ENCODE measurements at regions of chr11 and their contacts with region 1.

Region 1: DNA sequence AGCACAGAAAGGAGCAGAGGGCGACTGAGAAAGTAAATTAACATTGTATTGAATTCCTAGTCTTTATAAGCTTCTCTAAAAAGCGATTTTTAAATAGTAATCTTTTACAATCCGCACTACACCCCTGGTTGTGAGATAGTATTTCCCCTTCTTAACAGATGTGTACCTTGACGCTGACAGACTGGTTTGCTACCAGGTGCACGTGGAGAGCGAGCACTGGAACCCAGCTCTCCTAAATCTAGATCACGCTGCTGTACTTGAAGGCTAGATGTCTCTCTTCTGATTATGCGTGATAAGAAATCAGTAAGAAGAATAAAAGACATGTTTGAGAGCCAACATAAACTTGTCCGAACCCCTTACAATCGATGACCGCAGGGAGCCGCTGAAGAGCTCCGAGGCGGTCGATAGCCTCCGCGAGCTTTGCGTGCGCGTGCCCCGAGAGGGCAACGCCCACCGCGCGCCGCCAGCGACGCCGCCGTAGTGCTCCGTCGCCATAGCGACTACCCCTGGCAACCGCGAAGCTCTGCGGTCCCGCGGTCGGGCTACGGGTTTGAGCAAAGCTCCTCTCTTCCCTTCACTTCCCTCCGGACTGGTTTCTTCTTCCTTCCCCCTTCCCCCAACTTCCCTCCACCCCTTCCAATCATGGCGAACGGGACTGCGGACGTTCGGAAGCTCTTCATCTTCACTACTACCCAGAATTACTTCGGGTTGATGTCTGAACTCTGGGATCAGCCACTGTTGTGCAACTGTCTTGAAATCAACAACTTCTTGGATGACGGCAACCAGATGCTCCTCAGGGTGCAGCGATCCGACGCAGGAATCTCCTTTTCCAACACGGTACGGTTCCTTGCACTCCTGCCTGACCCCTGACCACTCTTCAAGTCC is at the start of gene DYNC2H1:
- DNase-seq: peak; percentile 52
- ATAC-seq: peak; percentile 92
- H3K4me3 ChIP-seq: peak within 1 kb of the TSS; percentile 34 to 46
- H3K27ac ChIP-seq: no peak within 1 kb of the TSS
- H3K4me1 ChIP-seq: peaks cover 0 to 7% of the 10 kb centered on the region in 2 experiments; a peak in 1 of 4 replicates
- H3K27me3 ChIP-seq: no peaks in the 10 kb centered on the region
- CTCF ChIP-seq: peak in 2 of 3 experiments; percentile 22 to 27; a peak in 2 of 6 replicates
- POLR2A ChIP-seq: no peak
- RAD21 ChIP-seq: no peak
- total RNA-seq, gene DYNC2H1: 1.5 TPM

Region 2: GRCh38 chr11:103091801-103092524 is 17.2 kb before region 1 on chr11 and contains the start of gene DCUN1D5:
- CTCF ChIA-PET with region 1: interaction called, 4 read pairs
- POLR2A ChIA-PET with region 1: interaction called, 8 read pairs
- RAD21 ChIA-PET with region 1: no interaction called
- intact Hi-C with region 1: loop called (anchors 2 kb)
- DNase-seq: peak; percentile 88
- ATAC-seq: peak; percentile 96
- H3K4me3 ChIP-seq: peak within 1 kb of the TSS; percentile 82 to 92
- H3K27ac ChIP-seq: peak within 1 kb of the TSS; percentile 81
- H3K4me1 ChIP-seq: peaks cover 0 to 14% of the 10 kb centered on the region in 2 experiments; a peak in 2 of 4 replicates
- H3K27me3 ChIP-seq: no peaks in the 10 kb centered on the region
- CTCF ChIP-seq: no peak
- POLR2A ChIP-seq: peak; percentile 92
- RAD21 ChIP-seq: no peak
- total RNA-seq, gene DCUN1D5: 60.1 TPM

Region 3: DNA sequence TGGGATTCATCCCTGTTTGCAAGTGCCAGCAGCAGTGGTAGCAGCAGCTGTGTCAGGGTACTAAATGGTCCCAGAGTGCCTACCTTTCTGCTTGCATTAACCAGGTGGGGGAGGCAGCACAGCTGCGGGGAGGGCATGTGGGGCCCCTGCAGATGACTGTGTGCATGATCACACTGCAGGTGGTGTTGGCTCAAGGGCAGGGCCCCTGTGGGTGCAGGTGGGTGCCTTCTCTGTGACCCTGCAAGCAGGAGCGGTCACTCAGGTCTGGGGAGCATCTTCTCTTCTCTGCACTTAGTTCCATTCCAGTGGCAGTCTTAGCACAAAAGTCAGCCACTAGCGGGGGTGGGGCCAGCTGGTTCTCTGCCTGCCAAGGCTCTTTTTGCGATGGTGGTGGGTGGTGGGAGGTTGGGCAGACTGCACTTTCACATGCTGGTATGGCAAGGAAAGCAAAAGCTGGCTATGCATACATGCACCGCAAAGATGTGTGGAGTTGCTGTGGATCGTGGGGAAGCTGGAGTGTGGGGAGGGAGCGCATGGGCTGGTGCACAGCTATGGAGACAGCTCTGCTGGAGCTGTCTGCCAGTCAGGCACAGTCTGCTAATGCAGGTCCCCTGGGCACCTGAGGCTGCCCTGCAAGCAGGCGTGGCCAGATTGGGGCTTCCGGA is 157.1 kb after region 1 on chr11:
- CTCF ChIA-PET with region 1: no interaction called
- POLR2A ChIA-PET with region 1: no interaction called
- RAD21 ChIA-PET with region 1: no interaction called
- intact Hi-C with region 1: no loop called
- DNase-seq: no peak
- ATAC-seq: no peak
- H3K4me3 ChIP-seq: no peak overlapping the region
- H3K27ac ChIP-seq: no peak overlapping the region
- H3K4me1 ChIP-seq: no peaks in the 10 kb centered on the region
- H3K27me3 ChIP-seq: no peaks in the 10 kb centered on the region
- CTCF ChIP-seq: no peak
- POLR2A ChIP-seq: no peak
- RAD21 ChIP-seq: no peak

Region 4: GRCh38 chr11:103537904-103538502 is 428.8 kb after region 1 on chr11:
- CTCF ChIA-PET with region 1: no interaction called
- POLR2A ChIA-PET with region 1: no interaction called
- RAD21 ChIA-PET with region 1: no interaction called
- intact Hi-C with region 1: no loop called
- DNase-seq: peak; percentile 21
- ATAC-seq: peak; percentile 78
- H3K4me3 ChIP-seq: no peak overlapping the region
- H3K27ac ChIP-seq: no peak overlapping the region
- H3K4me1 ChIP-seq: no peaks in the 10 kb centered on the region
- H3K27me3 ChIP-seq: no peaks in the 10 kb centered on the region
- CTCF ChIP-seq: peak; percentile 41 to 80 (median 66); a peak in 5 of 6 replicates
- POLR2A ChIP-seq: no peak
- RAD21 ChIP-seq: peak; percentile 44

Region 5: DNA sequence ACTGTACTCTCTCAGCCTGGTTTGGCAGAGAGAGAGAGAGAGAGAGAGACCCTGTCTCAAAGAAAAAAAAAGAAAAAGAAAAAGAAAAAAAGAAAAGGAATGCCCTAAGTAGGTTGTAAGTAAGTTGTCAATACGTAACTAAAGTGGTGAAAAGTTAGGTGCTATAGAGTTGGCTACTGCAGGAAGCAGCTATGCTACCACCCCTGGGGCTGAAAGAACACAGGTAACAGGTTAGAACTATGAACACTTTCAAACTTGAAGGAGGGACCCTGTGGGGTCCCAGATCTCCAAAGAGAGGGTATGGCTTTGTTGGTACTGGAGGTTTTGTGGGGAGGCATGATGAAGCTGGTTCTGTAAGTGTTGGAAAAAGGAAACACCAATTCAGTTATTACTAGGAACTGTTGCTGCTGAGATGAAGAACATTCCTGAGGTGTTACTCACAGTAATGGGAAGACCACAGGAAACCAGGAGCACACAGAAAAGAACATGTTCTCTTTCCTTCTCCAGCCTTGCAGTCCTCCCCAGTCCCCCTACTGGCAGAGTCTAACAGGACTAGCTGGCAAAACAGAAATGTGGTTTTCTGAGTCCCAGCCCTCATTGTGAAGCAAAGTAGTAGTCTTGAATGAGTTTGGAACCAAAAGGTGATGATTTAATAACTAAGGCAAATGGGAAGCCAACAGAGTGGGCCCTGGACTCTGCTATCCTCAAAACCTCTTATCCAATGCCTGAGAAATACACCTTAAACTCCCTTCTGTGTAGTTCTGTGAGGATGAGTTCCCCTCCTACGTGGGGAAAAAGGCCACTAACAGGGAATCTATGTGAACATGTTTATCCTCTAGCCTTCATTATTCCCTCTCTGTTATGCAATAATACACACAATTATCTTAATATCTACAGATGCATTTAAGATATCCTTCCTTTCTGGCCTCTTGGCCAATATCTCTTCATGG is 500.2 kb after region 1 on chr11:
- CTCF ChIA-PET with region 1: no interaction called
- POLR2A ChIA-PET with region 1: no interaction called
- RAD21 ChIA-PET with region 1: no interaction called
- intact Hi-C with region 1: loop called (anchors 5 kb)
- DNase-seq: peak; percentile 78
- ATAC-seq: peak; percentile 96
- H3K4me3 ChIP-seq: peak overlapping the region in 1 of 2 experiments; percentile 8; a peak in 1 of 4 replicates
- H3K27ac ChIP-seq: no peak overlapping the region
- H3K4me1 ChIP-seq: peaks cover 3 to 17% of the 10 kb centered on the region in 2 experiments; a peak in 3 of 4 replicates
- H3K27me3 ChIP-seq: no peaks in the 10 kb centered on the region
- CTCF ChIP-seq: peak; percentile 29 to 85 (median 72); a peak in 5 of 6 replicates
- POLR2A ChIP-seq: no peak
- RAD21 ChIP-seq: peak; percentile 35; the same call in 1 of the 2 replicates

Measured in HCT116 (cell line).